ENCODE measurements at regions of chr13 and their contacts with region 1.

Region 1: DNA sequence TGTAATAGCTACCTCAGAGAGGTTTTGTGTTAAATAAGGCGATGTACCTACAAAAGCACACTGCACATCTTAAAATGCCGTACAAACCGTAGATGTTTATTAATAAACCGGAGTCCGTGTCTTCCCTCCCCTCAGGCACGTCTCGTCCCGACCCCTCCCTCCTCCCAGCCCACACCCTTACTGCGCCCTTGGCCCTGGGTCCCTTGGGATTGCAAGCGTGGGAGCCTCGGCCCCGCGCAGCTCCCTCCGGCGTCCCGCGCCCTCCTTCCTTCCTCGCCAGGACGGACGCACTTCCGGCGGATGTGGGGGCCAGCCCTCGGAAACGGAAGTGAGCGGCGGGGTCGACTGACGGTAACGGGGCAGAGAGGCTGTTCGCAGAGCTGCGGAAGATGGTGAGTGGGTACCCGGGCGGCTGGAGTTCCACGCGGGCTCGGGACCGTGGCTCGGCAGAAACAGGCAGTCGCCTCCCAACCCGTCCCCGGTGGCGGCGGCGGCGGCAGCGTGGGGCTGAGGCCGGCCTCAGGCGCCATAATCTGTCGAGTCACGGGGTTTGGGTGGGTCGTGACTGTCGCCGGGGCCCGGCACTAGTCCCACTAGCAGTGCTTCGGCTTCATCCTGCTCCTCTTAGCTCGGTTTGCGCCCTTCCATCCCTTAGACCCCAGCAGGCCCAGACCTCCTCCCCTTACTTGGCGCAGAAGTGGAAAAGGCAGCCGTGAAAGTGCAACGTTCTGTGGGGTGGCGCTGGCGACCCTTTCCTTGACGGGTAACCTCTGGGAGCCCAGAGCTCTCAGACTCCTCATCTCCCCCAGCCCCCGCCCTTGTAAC is at the start of gene POMP:
- DNase-seq: peak; percentile 98
- H3K4me3 Mint-ChIP-seq: peak within 1 kb of the TSS; percentile 97
- H3K27ac Mint-ChIP-seq: peak within 1 kb of the TSS; percentile 99
- H3K4me1 Mint-ChIP-seq: peaks cover 49% of the 10 kb centered on the region
- H3K27me3 Mint-ChIP-seq: no peaks in the 10 kb centered on the region
- total RNA-seq, gene POMP: 152 and 161 TPM in 2 replicates

Region 2: GRCh38 chr13:27620377-27621115 is 1038.5 kb before region 1 on chr13 and contains the start of gene LNX2:
- intact Hi-C with region 1: loop called (anchors 2 kb)
- DNase-seq: peak; percentile 99
- H3K4me3 Mint-ChIP-seq: peak within 1 kb of the TSS; percentile 98
- H3K27ac Mint-ChIP-seq: peak within 1 kb of the TSS; percentile 93
- H3K4me1 Mint-ChIP-seq: peaks cover 44% of the 10 kb centered on the region
- H3K27me3 Mint-ChIP-seq: no peaks in the 10 kb centered on the region
- total RNA-seq, gene LNX2: 4.1 and 4.3 TPM in 2 replicates

Region 3: GRCh38 chr13:28324181-28324789 is 334.7 kb before region 1 on chr13:
- intact Hi-C with region 1: loop called (anchors 1 kb)
- DNase-seq: peak; percentile 89
- H3K4me3 Mint-ChIP-seq: no peak overlapping the region
- H3K27ac Mint-ChIP-seq: no peak overlapping the region
- H3K4me1 Mint-ChIP-seq: peaks cover 4% of the 10 kb centered on the region
- H3K27me3 Mint-ChIP-seq: no peaks in the 10 kb centered on the region

Region 4: GRCh38 chr13:28522871-28523270 is 136.1 kb before region 1 on chr13:
- intact Hi-C with region 1: loop called (anchors 5 kb)
- DNase-seq: no peak
- H3K4me3 Mint-ChIP-seq: no peak overlapping the region
- H3K27ac Mint-ChIP-seq: no peak overlapping the region
- H3K4me1 Mint-ChIP-seq: peaks cover 15% of the 10 kb centered on the region
- H3K27me3 Mint-ChIP-seq: peaks cover 6% of the 10 kb centered on the region

Region 5: DNA sequence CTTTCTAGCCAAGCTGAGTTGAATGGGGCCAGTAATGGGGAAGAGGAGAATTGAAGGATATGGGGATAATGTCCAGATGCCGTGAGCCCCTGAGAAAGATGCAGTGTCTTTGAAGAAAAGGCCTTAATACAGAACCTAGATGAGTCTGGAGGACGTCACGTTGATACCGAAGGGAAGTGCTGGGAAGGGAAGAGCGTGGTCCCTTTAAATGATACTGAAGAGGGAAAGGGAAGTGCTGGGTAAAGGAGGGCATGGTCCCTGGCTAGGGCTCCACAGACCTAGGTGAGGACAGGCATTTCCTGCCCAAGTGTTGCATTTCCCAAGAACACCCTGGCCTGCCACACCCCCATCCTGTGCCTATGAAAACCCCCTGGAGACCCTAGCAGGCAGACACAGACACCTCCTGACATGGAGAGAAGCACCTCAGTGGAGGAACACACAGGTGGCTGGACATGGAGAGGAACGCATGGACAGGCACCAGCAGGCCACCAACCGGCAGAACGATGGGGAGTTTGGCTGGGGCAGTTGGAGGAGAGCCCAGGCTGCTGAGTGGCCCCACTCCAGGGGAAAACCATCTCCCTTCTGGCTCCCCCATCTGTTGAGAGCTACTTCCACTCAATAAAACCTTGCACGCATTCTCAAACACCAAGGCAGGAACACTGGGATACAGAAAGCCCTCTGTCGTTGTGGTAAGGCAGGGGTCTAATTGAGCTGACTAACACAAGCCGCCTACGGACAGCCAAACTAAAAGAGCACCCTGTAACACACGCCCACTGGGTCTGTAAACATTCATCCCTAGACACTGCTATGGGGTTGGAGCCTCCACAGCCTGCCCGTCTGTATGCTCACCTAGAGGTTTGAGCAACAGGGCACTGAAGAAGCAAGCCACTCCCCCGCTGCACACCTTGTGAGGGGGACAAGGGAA is 35.0 kb before region 1 on chr13:
- intact Hi-C with region 1: no loop called
- DNase-seq: no peak
- H3K4me3 Mint-ChIP-seq: no peak overlapping the region
- H3K27ac Mint-ChIP-seq: no peak overlapping the region
- H3K4me1 Mint-ChIP-seq: peaks cover 12% of the 10 kb centered on the region
- H3K27me3 Mint-ChIP-seq: peaks cover 4% of the 10 kb centered on the region

Region 6: GRCh38 chr13:28707629-28708427 is 48.8 kb after region 1 on chr13:
- intact Hi-C with region 1: loop called (anchors 2 kb)
- DNase-seq: peak; percentile 75
- H3K4me3 Mint-ChIP-seq: no peak overlapping the region
- H3K27ac Mint-ChIP-seq: peak overlapping the region; percentile 0
- H3K4me1 Mint-ChIP-seq: peaks cover 9% of the 10 kb centered on the region
- H3K27me3 Mint-ChIP-seq: no peaks in the 10 kb centered on the region

Measured in activated CD4-positive, alpha-beta T cell treated with anti-CD3 and anti-CD28 coated beads, Interleukin-2, amount 10 ng/mL, durations not matched to agents 24 days and 14 days (primary cell).